Body of pancreas (tissue), 4 donors: ENCODE measurements at regions of chr10 and their contacts with region 1.

Region 1: DNA sequence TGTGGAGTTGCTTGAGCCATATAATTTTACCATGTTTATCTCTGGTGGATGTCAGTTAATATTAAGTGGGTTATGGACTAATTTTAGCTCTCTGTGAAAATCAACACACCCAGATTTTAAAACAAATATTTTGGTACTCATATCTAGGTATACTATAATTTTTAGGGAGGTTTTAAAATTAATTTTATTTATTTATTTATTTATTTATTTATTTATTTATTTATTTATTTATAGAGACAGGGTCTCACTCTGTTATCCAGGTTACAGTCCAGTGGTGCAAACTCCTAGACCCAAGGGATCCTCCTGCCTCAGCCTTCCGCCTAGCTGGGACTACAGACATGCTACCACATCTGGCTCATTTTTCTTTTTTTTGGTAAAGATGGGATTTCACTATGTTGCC is 7.3 kb upstream of the CREM start:
- DNase-seq: no peak
- ATAC-seq: no peak
- H3K4me3 ChIP-seq: no peak overlapping the region
- H3K27ac ChIP-seq: no peak overlapping the region
- H3K4me1 ChIP-seq: no peaks in the 10 kb centered on the region
- H3K27me3 ChIP-seq: no peaks in the 10 kb centered on the region
- CTCF ChIP-seq: no peak
- POLR2A ChIP-seq: no peak

Region 2: DNA sequence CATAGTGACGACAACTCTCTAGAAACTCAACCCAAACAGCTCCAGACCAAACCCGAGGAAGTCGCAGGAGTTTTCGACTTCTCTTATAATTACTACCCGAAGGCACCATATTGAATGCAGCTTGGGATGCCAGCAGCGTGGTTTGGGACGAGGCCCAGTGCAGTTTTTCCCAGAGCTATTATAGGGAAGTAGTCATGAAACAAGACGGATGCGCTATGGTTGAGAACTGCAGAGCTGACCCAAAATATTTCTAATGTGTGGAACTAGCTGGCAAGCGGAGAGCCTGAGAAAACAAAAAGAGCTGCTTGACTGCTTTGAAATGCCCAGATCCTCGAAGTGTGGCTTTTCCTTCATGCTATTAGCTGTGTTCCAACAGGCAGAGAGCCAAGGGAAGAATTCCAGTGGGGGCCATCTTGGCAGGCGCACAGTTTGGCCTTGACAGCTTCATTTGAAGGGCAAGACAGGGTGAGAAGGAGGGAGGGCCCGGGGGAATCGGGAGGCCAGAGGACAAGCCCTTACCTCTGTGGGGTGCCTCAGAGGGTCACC is 152.0 kb before region 1 on chr10:
- intact Hi-C with region 1: no loop called
- DNase-seq: peak; percentile 25 to 45 (median 35)
- ATAC-seq: peak; percentile 33
- H3K4me3 ChIP-seq: no peak overlapping the region
- H3K27ac ChIP-seq: peak overlapping the region in 3 of 4 donors; percentile 17 to 39 (median 31)
- H3K4me1 ChIP-seq: peaks cover 27% of the 10 kb centered on the region
- H3K27me3 ChIP-seq: no peaks in the 10 kb centered on the region
- CTCF ChIP-seq: no peak
- POLR2A ChIP-seq: no peak

Region 3: DNA sequence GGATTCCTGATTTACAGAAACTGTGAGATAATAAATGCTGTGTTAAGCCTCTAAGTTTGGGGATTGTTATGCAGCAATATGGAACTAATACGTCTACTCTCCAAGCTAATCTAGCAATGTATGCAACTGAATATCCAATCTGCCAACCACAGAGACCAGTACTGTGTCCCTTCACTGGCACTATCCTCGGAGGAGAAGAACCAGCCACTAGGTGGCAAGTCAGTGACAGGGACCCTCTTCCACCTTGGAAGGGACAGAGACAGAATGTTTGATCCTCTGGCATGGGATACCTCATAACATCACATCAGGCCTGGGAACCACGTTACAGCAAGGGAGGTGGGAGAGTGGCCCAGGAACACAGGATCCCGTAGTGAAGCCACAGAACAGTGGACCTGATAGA is 103.6 kb after region 1 on chr10:
- intact Hi-C with region 1: loop called (anchors 5 kb)
- DNase-seq: no peak
- ATAC-seq: no peak
- H3K4me3 ChIP-seq: no peak overlapping the region
- H3K27ac ChIP-seq: no peak overlapping the region
- H3K4me1 ChIP-seq: no peaks in the 10 kb centered on the region
- H3K27me3 ChIP-seq: no peaks in the 10 kb centered on the region
- CTCF ChIP-seq: no peak
- POLR2A ChIP-seq: no peak

Region 4: GRCh38 chr10:35574924-35575352 is 455.6 kb after region 1 on chr10:
- intact Hi-C with region 1: no loop called
- DNase-seq: no peak
- ATAC-seq: no peak
- H3K4me3 ChIP-seq: no peak overlapping the region
- H3K27ac ChIP-seq: no peak overlapping the region
- H3K4me1 ChIP-seq: no peaks in the 10 kb centered on the region
- H3K27me3 ChIP-seq: no peaks in the 10 kb centered on the region
- CTCF ChIP-seq: no peak
- POLR2A ChIP-seq: no peak